ENCODE measurements at regions of chr7 and their contacts with region 1.

Region 1: GRCh38 chr7:954330-955238 is at the start of gene ADAP1:
- DNase-seq: peak in 12 of 14 experiments; percentile 22 to 85 (median 56)
- ATAC-seq: peak; percentile 84
- H3K4me3 ChIP-seq: peak within 1 kb of the TSS; percentile 40
- H3K4me3 Mint-ChIP-seq: peak within 1 kb of the TSS; percentile 84
- H3K27ac ChIP-seq: no peak within 1 kb of the TSS
- H3K27ac Mint-ChIP-seq: no peak within 1 kb of the TSS
- H3K4me1 ChIP-seq: peaks cover 21% of the 10 kb centered on the region
- H3K4me1 Mint-ChIP-seq: no peaks in the 10 kb centered on the region
- H3K27me3 ChIP-seq: peaks cover 8 to 17% of the 10 kb centered on the region in 2 experiments
- H3K27me3 Mint-ChIP-seq: peaks cover 4% of the 10 kb centered on the region
- CTCF ChIP-seq: no peak
- total RNA-seq, gene ADAP1: 6.8 to 7.2 TPM

Region 2: DNA sequence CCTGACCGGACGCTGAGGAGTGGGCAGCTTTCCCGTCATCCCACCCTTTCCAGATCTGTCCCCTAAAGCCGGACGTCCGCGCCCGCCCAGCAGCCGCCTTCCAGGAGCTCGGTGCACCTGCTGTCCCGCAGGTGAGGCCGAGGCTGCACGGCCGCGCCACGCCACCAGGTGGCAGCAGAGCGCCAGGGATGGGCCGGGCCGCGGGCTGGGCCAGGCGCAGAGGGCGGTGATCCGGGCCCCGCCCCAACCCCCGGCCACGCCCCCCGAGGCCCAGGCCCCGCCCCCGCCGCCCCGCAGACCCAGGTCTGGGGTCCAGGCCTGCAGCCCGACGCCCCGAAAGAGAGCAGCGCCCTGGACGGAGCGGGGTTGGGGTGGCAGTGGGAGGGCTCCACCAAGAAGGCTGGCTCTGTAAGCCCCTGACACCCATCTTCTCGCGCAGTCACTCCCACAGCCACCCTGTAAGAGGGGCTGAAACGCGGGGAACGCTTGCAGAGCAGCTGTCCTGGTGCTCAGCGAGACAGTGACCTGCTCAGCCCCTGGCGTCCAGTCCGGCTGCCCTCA is 632.4 kb before region 1 on chr7:
- CTCF ChIA-PET with region 1: no interaction called
- POLR2A ChIA-PET with region 1: no interaction called
- intact Hi-C with region 1: loop called in 1 of 2 experiments (anchors 10 kb)
- DNase-seq: peak; percentile 67 to 94 (median 86)
- ATAC-seq: peak; percentile 100
- H3K4me3 ChIP-seq: peak overlapping the region; percentile 5
- H3K4me3 Mint-ChIP-seq: no peak overlapping the region
- H3K27ac ChIP-seq: no peak overlapping the region
- H3K27ac Mint-ChIP-seq: no peak overlapping the region
- H3K4me1 ChIP-seq: peaks cover 10% of the 10 kb centered on the region
- H3K4me1 Mint-ChIP-seq: no peaks in the 10 kb centered on the region
- H3K27me3 ChIP-seq: peaks cover 10 to 24% of the 10 kb centered on the region in 2 experiments
- H3K27me3 Mint-ChIP-seq: peaks cover 41% of the 10 kb centered on the region
- CTCF ChIP-seq: peak; percentile 69

Region 3: GRCh38 chr7:786472-787255 is 167.9 kb before region 1 on chr7:
- CTCF ChIA-PET with region 1: no interaction called
- POLR2A ChIA-PET with region 1: no interaction called
- intact Hi-C with region 1: loop called in 1 of 2 experiments (anchors 2 kb)
- DNase-seq: peak; percentile 59 to 85 (median 68)
- ATAC-seq: peak; percentile 100
- H3K4me3 ChIP-seq: no peak overlapping the region
- H3K4me3 Mint-ChIP-seq: no peak overlapping the region
- H3K27ac ChIP-seq: no peak overlapping the region
- H3K27ac Mint-ChIP-seq: no peak overlapping the region
- H3K4me1 ChIP-seq: peaks cover 6% of the 10 kb centered on the region
- H3K4me1 Mint-ChIP-seq: no peaks in the 10 kb centered on the region
- H3K27me3 ChIP-seq: no peaks in the 10 kb centered on the region
- H3K27me3 Mint-ChIP-seq: no peaks in the 10 kb centered on the region
- CTCF ChIP-seq: peak; percentile 74

Region 4: DNA sequence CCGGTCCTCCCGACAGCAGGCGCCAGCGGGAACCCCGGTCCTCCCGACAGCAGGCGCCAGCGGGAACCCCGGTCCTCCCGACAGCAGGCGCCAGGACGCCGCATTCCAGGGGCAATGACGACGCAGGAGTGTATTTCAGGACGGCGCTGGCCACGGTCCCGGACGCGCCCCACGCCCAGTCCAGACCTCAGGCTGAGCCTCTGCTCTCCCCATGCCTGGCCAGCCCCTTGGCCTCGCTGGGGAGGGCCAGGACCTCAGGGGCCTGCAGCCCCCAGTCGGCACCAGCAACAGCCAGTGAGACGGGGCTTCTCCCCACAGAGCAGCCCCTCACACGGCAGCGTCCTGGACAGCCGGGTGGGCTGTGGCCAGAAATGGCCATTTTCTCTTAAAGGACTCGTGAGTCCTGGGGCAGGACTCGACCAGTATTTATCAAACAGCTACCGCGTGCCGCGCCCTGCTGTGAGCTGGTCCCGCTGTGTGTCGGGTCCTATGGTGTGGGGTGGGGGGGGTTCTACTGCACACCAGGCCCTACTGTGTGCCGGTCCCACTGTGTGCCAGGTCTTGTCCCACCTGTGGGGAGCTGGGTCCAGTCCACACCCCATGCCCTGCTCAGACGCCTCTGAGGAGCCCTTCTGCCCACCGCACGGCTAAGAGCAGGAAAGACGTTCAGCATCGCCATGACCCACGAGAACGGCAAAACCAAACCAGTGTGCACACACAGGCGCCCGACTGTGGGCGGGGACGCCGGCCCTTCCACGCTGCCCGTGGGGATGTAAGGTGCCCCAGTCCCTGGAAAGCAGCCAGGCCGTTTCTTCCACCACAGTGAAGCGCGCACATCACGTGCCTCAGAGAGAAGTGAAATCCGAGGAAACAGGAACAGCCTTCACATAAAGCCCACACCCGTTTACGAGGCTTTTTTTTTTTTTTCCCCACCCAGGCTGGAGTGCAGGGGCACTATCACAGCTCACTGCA is 44.9 kb before region 1 on chr7:
- CTCF ChIA-PET with region 1: interaction called, 8 read pairs
- POLR2A ChIA-PET with region 1: interaction called, 3 read pairs
- intact Hi-C with region 1: loop called in 1 of 2 experiments (anchors 1 kb)
- DNase-seq: peak in 5 of 14 experiments; percentile 29 to 77 (median 52)
- ATAC-seq: peak; percentile 27
- H3K4me3 ChIP-seq: no peak overlapping the region
- H3K4me3 Mint-ChIP-seq: peak overlapping the region; percentile 81
- H3K27ac ChIP-seq: no peak overlapping the region
- H3K27ac Mint-ChIP-seq: peak overlapping the region; percentile 76
- H3K4me1 ChIP-seq: peaks cover 30% of the 10 kb centered on the region
- H3K4me1 Mint-ChIP-seq: peaks cover 11% of the 10 kb centered on the region
- H3K27me3 ChIP-seq: no peaks in the 10 kb centered on the region
- H3K27me3 Mint-ChIP-seq: no peaks in the 10 kb centered on the region
- CTCF ChIP-seq: peak; percentile 40

Region 5: GRCh38 chr7:923108-924041 is 31.2 kb before region 1 on chr7:
- CTCF ChIA-PET with region 1: no interaction called
- POLR2A ChIA-PET with region 1: interaction called, 10 read pairs
- intact Hi-C with region 1: no loop called
- DNase-seq: peak; percentile 80 to 97 (median 91)
- ATAC-seq: peak; percentile 92
- H3K4me3 ChIP-seq: peak overlapping the region; percentile 77
- H3K4me3 Mint-ChIP-seq: peak overlapping the region; percentile 90
- H3K27ac ChIP-seq: peak overlapping the region; percentile 89 to 91
- H3K27ac Mint-ChIP-seq: peak overlapping the region; percentile 92
- H3K4me1 ChIP-seq: peaks cover 60% of the 10 kb centered on the region
- H3K4me1 Mint-ChIP-seq: peaks cover 30% of the 10 kb centered on the region
- H3K27me3 ChIP-seq: no peaks in the 10 kb centered on the region
- H3K27me3 Mint-ChIP-seq: no peaks in the 10 kb centered on the region
- CTCF ChIP-seq: no peak

Measured in CD4-positive, alpha-beta T cell (primary cell).